ENCODE measurements at regions of chr20 and their contacts with region 1.

Region 1: DNA sequence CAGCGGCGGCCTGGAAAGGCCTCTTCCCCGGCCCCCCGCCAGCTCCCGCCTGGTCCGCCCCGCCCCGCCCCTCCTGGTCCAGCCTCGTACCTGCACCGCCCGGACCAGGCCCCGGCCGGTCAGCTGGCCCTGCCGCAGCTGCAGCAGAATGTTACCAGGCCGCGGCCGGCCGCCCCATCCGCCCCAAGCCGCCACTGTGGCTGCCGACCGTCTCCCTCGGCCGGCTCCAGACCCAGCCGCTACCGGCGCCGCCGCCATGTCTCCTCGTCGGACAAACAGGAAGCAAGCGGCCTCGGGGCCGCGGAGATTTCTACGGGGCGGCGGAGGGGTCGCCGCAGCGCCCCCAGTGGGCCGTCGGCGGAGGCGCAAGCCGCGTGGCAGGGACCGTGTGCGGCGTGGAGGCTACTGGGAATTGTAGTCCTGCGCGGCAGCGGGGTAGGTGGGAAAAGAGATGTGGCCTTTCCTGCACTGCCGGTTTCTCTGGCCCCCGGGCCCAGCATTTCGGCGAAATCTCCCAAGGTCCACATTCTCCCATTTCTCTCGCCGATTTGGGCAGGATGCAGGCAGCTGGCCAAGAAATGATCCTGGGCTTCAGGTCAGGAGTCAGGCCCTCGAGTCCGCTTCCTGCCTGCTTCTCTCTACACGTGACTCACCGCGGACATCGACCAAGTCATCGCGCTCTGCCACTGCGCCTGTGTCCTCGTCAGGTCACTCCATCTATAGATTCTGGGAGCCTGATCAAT is at the start of gene TRPC4AP:
- DNase-seq: peak; percentile 57
- ATAC-seq: peak; percentile 95
- H3K4me3 ChIP-seq: peak within 1 kb of the TSS; percentile 82
- H3K27ac ChIP-seq: peak within 1 kb of the TSS; percentile 69
- H3K4me1 ChIP-seq: peaks cover 15% of the 10 kb centered on the region
- H3K27me3 ChIP-seq: no peaks in the 10 kb centered on the region
- CTCF ChIP-seq: peak; percentile 90 to 99 (median 98); a peak in 5 of 6 replicates
- EP300 ChIP-seq: peak in 1 of 2 experiments; percentile 26; a peak in 1 of 4 replicates
- POLR2A ChIP-seq: peak; percentile 96
- RAD21 ChIP-seq: peak; percentile 64
- polyA plus RNA-seq, gene TRPC4AP: 1.1 to 2.2 TPM

Region 2: DNA sequence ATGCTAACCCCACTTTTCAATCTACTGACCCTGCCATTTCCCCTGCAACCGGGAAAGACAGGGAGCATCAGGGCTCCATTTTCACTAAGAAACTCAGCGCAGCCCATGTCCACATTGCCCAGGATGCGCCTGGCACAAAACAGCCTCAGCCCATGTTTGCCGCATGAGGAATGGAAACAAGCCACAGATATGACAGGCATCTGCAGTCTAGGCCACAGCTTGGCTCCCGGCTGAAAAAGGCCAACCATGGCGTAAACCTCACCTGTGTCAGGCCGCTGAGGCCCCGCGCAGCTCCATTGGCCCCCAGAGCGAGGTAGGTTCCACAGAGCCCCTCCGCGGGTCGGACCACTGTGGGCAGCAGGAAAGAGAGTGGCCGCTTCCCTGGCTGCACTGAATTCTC is 241.7 kb before region 1 on chr20:
- CTCF ChIA-PET with region 1: no interaction called
- POLR2A ChIA-PET with region 1: no interaction called
- RAD21 ChIA-PET with region 1: no interaction called
- SMC1A ChIA-PET with region 1: no interaction called
- in situ Hi-C with region 1: no loop called
- intact Hi-C with region 1: no loop called
- DNase-seq: no peak
- ATAC-seq: no peak
- H3K4me3 ChIP-seq: no peak overlapping the region
- H3K27ac ChIP-seq: no peak overlapping the region
- H3K4me1 ChIP-seq: no peaks in the 10 kb centered on the region
- H3K27me3 ChIP-seq: no peaks in the 10 kb centered on the region
- CTCF ChIP-seq: no peak
- EP300 ChIP-seq: no peak
- POLR2A ChIP-seq: no peak
- RAD21 ChIP-seq: no peak

Region 3: DNA sequence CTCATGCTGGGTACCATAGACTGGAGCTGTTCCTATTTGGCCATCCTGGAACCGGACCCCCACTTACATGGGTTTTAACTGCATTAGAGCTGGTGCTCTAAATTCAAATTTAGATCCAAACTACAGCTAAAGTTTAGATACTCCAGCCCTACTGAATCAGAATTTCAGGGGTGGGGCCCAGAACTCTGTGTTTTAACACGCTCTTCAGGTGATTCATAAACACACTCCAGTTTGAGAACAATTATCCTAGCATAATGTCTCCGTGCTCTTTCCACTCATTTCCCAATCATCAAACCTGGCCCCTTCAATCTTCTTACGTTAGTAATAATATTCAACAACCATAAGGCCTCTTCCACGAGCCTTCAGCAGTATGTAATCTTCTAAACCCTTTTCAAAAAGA is 15.4 kb before region 1 on chr20:
- CTCF ChIA-PET with region 1: interaction called, 12 read pairs
- POLR2A ChIA-PET with region 1: no interaction called
- RAD21 ChIA-PET with region 1: interaction called, 3 read pairs
- SMC1A ChIA-PET with region 1: interaction called, 3 read pairs
- in situ Hi-C with region 1: no loop called
- intact Hi-C with region 1: no loop called
- DNase-seq: no peak
- ATAC-seq: no peak
- H3K4me3 ChIP-seq: no peak overlapping the region
- H3K27ac ChIP-seq: no peak overlapping the region
- H3K4me1 ChIP-seq: no peaks in the 10 kb centered on the region
- H3K27me3 ChIP-seq: no peaks in the 10 kb centered on the region
- CTCF ChIP-seq: no peak
- EP300 ChIP-seq: no peak
- POLR2A ChIP-seq: no peak
- RAD21 ChIP-seq: no peak

Region 4: DNA sequence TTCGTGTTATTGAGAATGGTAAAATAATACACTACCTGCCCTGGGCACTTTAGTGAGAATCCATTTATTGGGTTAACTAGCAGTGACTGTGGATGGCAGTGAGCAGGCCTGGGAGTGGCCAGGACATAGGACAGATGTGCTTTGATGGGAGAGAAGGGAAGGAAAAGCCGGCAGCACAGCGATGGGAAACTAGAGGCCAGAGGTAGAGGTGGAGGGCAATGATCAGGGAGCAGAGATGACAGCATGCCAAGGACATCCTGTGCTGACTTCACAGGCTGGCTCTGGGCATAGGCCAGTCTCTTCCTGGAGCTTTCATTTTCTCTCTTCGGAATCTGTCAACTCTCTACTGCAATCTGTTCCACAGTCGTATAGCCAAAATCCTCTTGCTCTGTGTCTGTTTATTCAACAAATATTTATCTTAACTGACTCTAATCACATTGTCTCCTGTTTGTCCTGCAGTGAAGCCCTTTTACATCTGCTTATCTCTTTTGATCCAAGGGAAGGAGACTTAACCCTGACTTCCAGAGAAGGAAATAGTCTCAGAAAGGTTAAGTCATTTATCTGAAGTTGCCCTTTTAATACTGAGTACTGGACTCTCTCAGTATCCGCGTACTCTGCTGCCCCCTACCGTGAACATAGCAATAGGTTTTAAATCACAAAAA is 115.4 kb after region 1 on chr20:
- CTCF ChIA-PET with region 1: interaction called, 58 read pairs
- POLR2A ChIA-PET with region 1: no interaction called
- RAD21 ChIA-PET with region 1: interaction called, 8 read pairs
- SMC1A ChIA-PET with region 1: interaction called, 17 read pairs
- in situ Hi-C with region 1: no loop called
- intact Hi-C with region 1: loop called (anchors 1 kb)
- DNase-seq: peak; percentile 20
- ATAC-seq: peak; percentile 97
- H3K4me3 ChIP-seq: no peak overlapping the region
- H3K27ac ChIP-seq: no peak overlapping the region
- H3K4me1 ChIP-seq: no peaks in the 10 kb centered on the region
- H3K27me3 ChIP-seq: no peaks in the 10 kb centered on the region
- CTCF ChIP-seq: peak; percentile 66 to 89 (median 71)
- EP300 ChIP-seq: no peak
- POLR2A ChIP-seq: no peak
- RAD21 ChIP-seq: peak; percentile 94

Region 5: DNA sequence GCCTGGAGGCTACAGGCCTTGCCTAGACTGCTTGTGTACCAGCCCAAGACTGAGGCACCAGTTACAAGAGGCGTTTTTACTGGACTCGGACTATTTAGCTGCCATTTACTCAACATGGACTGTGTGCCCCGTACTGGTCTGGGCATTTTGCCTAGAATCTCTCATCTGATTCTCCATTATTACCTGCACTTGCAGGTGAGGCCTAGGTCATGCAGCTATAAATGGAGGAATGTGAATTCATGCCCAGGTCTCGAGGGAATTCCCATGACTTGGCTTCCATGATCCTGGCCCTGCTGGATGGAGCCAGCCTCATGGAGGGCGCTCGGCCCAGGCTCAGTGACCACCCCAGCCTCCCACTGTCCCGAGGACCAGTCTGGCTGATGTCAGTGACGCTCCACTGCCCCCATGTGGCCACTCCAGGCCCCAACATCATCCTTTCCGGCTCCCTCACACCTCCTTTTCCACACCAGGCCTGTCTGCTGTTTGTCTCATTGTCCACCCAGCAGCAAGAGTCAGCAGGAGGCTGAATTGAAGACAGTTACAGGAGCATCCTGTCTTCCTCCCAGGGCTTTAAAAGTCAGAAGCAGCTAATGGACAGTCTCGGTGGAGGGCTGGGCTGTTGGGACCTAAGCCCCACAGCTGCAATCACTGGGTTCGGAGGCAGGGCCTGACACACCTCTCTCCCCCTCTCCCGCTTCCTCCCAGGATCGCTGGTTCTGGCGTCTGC is 176.5 kb after region 1 on chr20:
- CTCF ChIA-PET with region 1: interaction called, 20 read pairs
- POLR2A ChIA-PET with region 1: no interaction called
- RAD21 ChIA-PET with region 1: interaction called, 3 read pairs
- SMC1A ChIA-PET with region 1: interaction called, 8 read pairs
- in situ Hi-C with region 1: no loop called
- intact Hi-C with region 1: loop called (anchors 5 kb)
- DNase-seq: no peak
- ATAC-seq: peak; percentile 96
- H3K4me3 ChIP-seq: no peak overlapping the region
- H3K27ac ChIP-seq: no peak overlapping the region
- H3K4me1 ChIP-seq: no peaks in the 10 kb centered on the region
- H3K27me3 ChIP-seq: no peaks in the 10 kb centered on the region
- CTCF ChIP-seq: peak; percentile 78 to 83 (median 82)
- EP300 ChIP-seq: no peak
- POLR2A ChIP-seq: no peak
- RAD21 ChIP-seq: peak; percentile 76

Measured in GM12878 (cell line).